Activated B cell treated with CpG ODN at 0.5 μM for 24 hours (primary cell): ENCODE measurements at regions of chr14 and their contacts with region 1.

Region 1: GRCh38 chr14:68816262-68816942 is 23.5 kb upstream of the ZFP36L1 start:
- DNase-seq: peak; percentile 96
- ATAC-seq: peak; percentile 74
- H3K4me3 Mint-ChIP-seq: peak overlapping the region; percentile 89
- H3K27ac Mint-ChIP-seq: peak overlapping the region; percentile 93
- H3K4me1 Mint-ChIP-seq: peaks cover 86% of the 10 kb centered on the region
- H3K27me3 Mint-ChIP-seq: no peaks in the 10 kb centered on the region
- CTCF ChIP-seq: peak; percentile 54

Region 2: DNA sequence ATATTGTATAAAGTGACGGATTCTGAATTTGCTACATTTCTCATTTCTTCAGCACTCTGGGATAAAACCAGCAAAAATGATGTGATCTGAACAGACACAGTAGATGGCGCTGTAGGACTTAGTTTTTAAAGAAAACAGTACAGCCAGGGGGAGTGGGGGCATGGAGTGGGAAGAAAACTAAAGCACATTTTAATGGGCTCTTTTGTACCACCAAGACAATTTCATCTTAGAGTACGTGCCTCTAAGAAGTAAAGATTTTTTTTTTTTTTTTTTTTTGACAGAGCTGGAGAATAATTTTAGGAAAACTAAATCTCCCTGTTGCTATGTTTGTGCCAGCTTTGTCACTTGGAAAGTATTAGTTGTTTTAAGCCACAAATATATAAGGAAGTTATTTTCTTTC is 872.5 kb before region 1 on chr14:
- CTCF ChIA-PET with region 1: interaction called, 18 read pairs
- POLR2A ChIA-PET with region 1: interaction called, 20 read pairs
- intact Hi-C with region 1: loop called (anchors 1 kb)
- DNase-seq: no peak
- ATAC-seq: peak; percentile 54
- H3K4me3 Mint-ChIP-seq: no peak overlapping the region
- H3K27ac Mint-ChIP-seq: no peak overlapping the region
- H3K4me1 Mint-ChIP-seq: peaks cover 8% of the 10 kb centered on the region
- H3K27me3 Mint-ChIP-seq: no peaks in the 10 kb centered on the region
- CTCF ChIP-seq: no peak

Region 3: DNA sequence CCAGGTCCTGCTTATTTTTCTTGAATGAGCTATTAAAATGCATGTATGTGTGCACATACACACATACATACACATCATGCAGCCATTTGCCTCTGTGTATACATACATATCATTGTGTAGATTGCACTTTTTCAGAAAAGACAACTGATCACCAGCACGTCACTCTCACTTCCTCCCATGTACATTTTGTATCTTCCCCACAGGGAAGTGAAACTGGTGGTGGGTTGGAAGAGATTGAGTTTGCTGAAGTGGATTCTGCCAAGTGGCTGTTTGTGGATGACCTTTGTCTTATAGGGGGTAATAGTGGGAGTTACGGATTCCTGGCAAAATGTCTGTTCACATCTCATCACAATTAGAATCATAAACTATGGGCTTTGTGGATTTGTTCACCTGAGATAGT is 548.2 kb before region 1 on chr14:
- CTCF ChIA-PET with region 1: interaction called, 3 read pairs
- POLR2A ChIA-PET with region 1: interaction called, 113 read pairs
- intact Hi-C with region 1: no loop called
- DNase-seq: no peak
- ATAC-seq: peak; percentile 67
- H3K4me3 Mint-ChIP-seq: peak overlapping the region; percentile 63
- H3K27ac Mint-ChIP-seq: peak overlapping the region; percentile 93
- H3K4me1 Mint-ChIP-seq: peaks cover 93% of the 10 kb centered on the region
- H3K27me3 Mint-ChIP-seq: no peaks in the 10 kb centered on the region
- CTCF ChIP-seq: no peak

Region 4: GRCh38 chr14:68369281-68370056 is 446.9 kb before region 1 on chr14:
- CTCF ChIA-PET with region 1: interaction called, 4 read pairs
- POLR2A ChIA-PET with region 1: interaction called, 21 read pairs
- intact Hi-C with region 1: no loop called
- DNase-seq: no peak
- ATAC-seq: peak; percentile 23
- H3K4me3 Mint-ChIP-seq: peak overlapping the region; percentile 59
- H3K27ac Mint-ChIP-seq: peak overlapping the region; percentile 95
- H3K4me1 Mint-ChIP-seq: peaks cover 94% of the 10 kb centered on the region
- H3K27me3 Mint-ChIP-seq: no peaks in the 10 kb centered on the region
- CTCF ChIP-seq: no peak

Region 5: GRCh38 chr14:68495101-68496039 is 321.0 kb before region 1 on chr14:
- CTCF ChIA-PET with region 1: no interaction called
- POLR2A ChIA-PET with region 1: interaction called, 61 read pairs
- intact Hi-C with region 1: loop called (anchors 1 kb)
- DNase-seq: no peak
- ATAC-seq: peak; percentile 92
- H3K4me3 Mint-ChIP-seq: peak overlapping the region; percentile 64
- H3K27ac Mint-ChIP-seq: peak overlapping the region; percentile 98
- H3K4me1 Mint-ChIP-seq: peaks cover 84% of the 10 kb centered on the region
- H3K27me3 Mint-ChIP-seq: no peaks in the 10 kb centered on the region
- CTCF ChIP-seq: no peak

Region 6: GRCh38 chr14:68734231-68734775 is 82.1 kb before region 1 on chr14:
- CTCF ChIA-PET with region 1: no interaction called
- POLR2A ChIA-PET with region 1: interaction called, 17 read pairs
- intact Hi-C with region 1: no loop called
- DNase-seq: no peak
- ATAC-seq: peak; percentile 74
- H3K4me3 Mint-ChIP-seq: peak overlapping the region; percentile 39
- H3K27ac Mint-ChIP-seq: peak overlapping the region; percentile 82
- H3K4me1 Mint-ChIP-seq: peaks cover 78% of the 10 kb centered on the region
- H3K27me3 Mint-ChIP-seq: no peaks in the 10 kb centered on the region
- CTCF ChIP-seq: no peak

Region 7: DNA sequence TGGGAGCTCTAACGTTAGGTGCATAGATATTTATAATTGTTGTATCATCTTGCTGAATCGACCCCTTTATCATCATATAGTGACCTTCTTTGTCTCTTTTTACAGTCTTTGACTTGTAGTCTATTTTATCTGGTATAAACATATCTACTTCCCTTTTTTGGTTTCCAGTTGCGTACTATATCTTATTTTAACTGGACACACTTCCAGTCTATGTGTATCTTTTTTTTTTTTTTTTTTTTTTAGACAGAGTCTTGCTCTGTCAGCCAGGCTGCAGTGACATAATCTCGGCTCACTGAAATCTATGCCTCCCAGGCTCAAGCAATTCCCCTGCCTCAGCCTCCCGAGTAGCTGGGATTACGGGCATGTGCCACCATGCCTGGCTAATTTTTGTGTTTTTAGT is 18.4 kb after region 1 on chr14:
- CTCF ChIA-PET with region 1: no interaction called
- POLR2A ChIA-PET with region 1: no interaction called
- intact Hi-C with region 1: no loop called
- DNase-seq: no peak
- ATAC-seq: peak; percentile 67
- H3K4me3 Mint-ChIP-seq: no peak overlapping the region
- H3K27ac Mint-ChIP-seq: no peak overlapping the region
- H3K4me1 Mint-ChIP-seq: peaks cover 18% of the 10 kb centered on the region
- H3K27me3 Mint-ChIP-seq: no peaks in the 10 kb centered on the region
- CTCF ChIP-seq: no peak

Region 8: DNA sequence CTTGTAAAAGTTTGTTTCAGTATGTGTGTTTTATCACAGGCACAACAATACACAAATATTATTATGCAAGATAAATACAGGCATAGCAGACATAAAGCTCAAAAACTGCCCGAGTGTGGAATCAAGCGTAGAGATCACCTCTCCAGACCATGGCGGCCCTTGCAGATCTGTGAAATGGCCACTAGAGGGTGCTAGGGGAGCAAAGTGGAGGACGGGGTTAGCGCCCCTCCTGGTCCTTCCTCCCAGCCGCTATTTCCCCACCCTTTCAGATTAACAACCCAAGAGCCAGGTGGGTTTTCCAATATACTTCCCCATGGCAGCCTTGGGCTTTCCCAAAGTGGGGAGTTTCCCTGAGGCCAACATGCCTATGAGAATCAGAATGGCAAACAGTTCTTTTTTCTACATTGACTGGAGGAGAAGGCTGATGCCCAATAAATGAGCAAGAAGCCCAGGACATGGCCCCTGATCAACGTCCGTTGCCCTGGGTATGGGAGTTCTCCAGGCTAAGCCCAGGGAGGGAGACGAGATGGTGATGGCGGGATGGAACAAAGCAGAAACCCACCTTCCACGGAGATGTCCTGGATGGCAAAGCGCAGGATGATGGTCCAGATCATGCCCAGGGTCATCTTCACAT is 95.3 kb after region 1 on chr14:
- CTCF ChIA-PET with region 1: no interaction called
- POLR2A ChIA-PET with region 1: no interaction called
- intact Hi-C with region 1: no loop called
- DNase-seq: peak; percentile 37
- ATAC-seq: peak; percentile 91
- H3K4me3 Mint-ChIP-seq: no peak overlapping the region
- H3K27ac Mint-ChIP-seq: no peak overlapping the region
- H3K4me1 Mint-ChIP-seq: peaks cover 8% of the 10 kb centered on the region
- H3K27me3 Mint-ChIP-seq: peaks cover 6% of the 10 kb centered on the region
- CTCF ChIP-seq: peak; percentile 66